Activated naive CD4-positive, alpha-beta T cell treated with anti-CD3 and anti-CD28 coated beads for 36 hours (primary cell): ENCODE measurements at regions of chr13 and their contacts with region 1.

Region 1: DNA sequence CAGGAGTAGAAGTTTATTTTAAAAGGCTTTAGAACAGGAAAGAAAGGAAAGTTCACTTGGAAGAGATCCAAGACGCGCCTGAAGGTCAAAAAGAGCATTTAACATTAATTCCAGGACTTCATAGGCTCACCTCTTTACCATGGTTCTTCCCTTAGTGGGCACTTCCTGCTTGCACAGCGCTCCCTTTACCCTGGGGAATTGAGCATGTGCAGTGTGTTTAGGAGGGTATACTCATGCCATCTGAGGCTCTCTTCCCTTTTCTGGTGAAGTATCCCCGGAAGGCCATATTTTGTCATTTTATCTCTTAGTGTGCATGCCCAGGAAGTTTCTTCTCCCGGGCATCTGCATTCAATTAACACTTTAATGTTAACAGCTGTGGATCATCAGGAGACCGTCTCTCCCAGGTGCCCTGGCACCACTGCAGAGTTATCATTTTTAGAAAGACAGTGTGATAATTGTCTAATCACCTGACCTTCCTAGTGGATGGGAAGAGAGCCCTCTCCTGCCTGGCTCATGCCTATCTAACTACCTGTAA is 66.1 kb upstream of the ABCC4 start:
- DNase-seq: no peak
- H3K4me3 Mint-ChIP-seq: no peak overlapping the region
- H3K27ac Mint-ChIP-seq: no peak overlapping the region
- H3K4me1 Mint-ChIP-seq: no peaks in the 10 kb centered on the region
- H3K27me3 Mint-ChIP-seq: peaks cover 5% of the 10 kb centered on the region

Region 2: DNA sequence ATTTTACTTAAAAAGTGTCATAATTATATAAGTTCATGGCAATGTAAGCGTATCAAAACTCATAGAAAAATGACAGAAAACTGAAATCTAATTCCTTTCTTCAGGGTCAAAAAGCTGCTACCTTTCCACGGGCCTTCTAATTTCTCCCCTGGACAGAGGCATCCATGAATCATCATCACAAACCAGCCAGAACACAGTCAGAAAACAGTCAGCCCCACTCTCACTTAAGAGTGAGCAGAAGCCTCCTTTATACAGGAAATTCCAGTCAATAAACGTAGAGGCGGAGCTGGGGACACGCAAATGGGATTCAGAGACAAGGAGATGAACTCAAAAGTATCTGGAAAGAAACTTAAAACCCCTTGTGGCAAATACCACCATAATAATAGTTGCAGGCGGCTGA is 11.9 kb before region 1 on chr13:
- CTCF ChIA-PET with region 1: no interaction called
- intact Hi-C with region 1: no loop called
- DNase-seq: no peak
- H3K4me3 Mint-ChIP-seq: no peak overlapping the region
- H3K27ac Mint-ChIP-seq: no peak overlapping the region
- H3K4me1 Mint-ChIP-seq: no peaks in the 10 kb centered on the region
- H3K27me3 Mint-ChIP-seq: peaks cover 2% of the 10 kb centered on the region

Region 3: DNA sequence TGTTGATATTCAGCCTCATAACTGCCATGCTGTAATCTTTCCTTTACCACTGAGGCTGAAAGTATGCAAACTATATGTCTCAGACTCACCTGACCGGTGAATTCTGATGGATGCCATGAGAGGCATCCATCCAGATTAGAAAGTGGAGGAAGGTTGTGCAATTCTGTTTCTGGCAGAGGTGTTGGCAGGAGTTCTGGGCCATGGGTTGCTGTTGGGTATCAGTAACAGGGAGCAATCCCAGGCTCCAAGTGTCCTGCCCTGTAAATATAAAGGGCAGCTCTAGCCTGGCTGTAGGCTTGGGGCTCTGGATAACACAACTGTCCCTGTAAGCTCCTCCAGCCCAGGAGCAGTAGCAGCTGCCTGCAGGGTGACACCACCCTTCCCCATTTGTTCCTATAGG is 11.2 kb after region 1 on chr13:
- CTCF ChIA-PET with region 1: interaction called, 19 read pairs
- intact Hi-C with region 1: no loop called
- DNase-seq: no peak
- H3K4me3 Mint-ChIP-seq: no peak overlapping the region
- H3K27ac Mint-ChIP-seq: no peak overlapping the region
- H3K4me1 Mint-ChIP-seq: peaks cover 5% of the 10 kb centered on the region
- H3K27me3 Mint-ChIP-seq: no peaks in the 10 kb centered on the region